ENCODE measurements at regions of chr9 and their contacts with region 1.

Region 1: GRCh38 chr9:109574068-109574882 is 76.2 kb upstream of the PTPN3 start:
- DNase-seq: peak; percentile 38
- ATAC-seq: peak; percentile 92
- H3K4me3 ChIP-seq: no peak overlapping the region
- H3K27ac ChIP-seq: no peak overlapping the region
- H3K4me1 ChIP-seq: no peaks in the 10 kb centered on the region
- H3K27me3 ChIP-seq: 0 out of 2 replicates have a peak, but pooled peaks cover 5% of the 10 kb centered on the region
- CTCF ChIP-seq: peak; percentile 58 to 82 (median 72)
- POLR2A ChIP-seq: no peak
- RAD21 ChIP-seq: peak; percentile 84

Region 2: DNA sequence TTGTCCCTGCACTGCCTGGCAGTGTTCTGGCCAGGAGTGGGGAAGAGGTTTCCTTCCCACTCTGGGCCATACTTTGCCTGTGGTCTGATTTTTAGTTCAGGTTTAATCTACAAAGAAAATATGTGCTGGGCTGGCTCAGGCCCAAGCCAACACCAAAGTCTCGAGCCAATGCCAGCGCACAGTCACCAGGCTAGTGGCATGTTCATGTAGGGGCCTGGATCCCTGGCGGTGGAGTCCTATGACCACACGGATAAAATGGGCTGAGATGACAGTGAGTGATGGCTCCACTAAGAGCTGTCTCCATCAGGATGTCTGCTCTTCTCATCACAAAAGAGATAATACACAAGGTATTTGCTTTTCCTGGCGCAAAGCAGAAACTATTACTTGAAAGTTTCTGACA is 16.7 kb after region 1 on chr9:
- CTCF ChIA-PET with region 1: no interaction called
- POLR2A ChIA-PET with region 1: no interaction called
- RAD21 ChIA-PET with region 1: no interaction called
- intact Hi-C with region 1: no loop called
- DNase-seq: no peak
- ATAC-seq: no peak
- H3K4me3 ChIP-seq: no peak overlapping the region
- H3K27ac ChIP-seq: no peak overlapping the region
- H3K4me1 ChIP-seq: no peaks in the 10 kb centered on the region
- H3K27me3 ChIP-seq: no peaks in the 10 kb centered on the region
- CTCF ChIP-seq: no peak
- POLR2A ChIP-seq: no peak
- RAD21 ChIP-seq: no peak

Region 3: GRCh38 chr9:109652964-109653363 is 78.7 kb after region 1 on chr9:
- CTCF ChIA-PET with region 1: interaction called, 3 read pairs
- POLR2A ChIA-PET with region 1: no interaction called
- RAD21 ChIA-PET with region 1: no interaction called
- intact Hi-C with region 1: loop called (anchors 1 kb)
- DNase-seq: no peak
- ATAC-seq: peak; percentile 73
- H3K4me3 ChIP-seq: no peak overlapping the region
- H3K27ac ChIP-seq: no peak overlapping the region
- H3K4me1 ChIP-seq: peaks cover 0 to 3% of the 10 kb centered on the region in 2 experiments; a peak in 1 of 4 replicates
- H3K27me3 ChIP-seq: peaks cover 24% of the 10 kb centered on the region; the same call in 1 of the 2 replicates
- CTCF ChIP-seq: peak; percentile 47 to 51 (median 48); a peak in 5 of 6 replicates
- POLR2A ChIP-seq: no peak
- RAD21 ChIP-seq: peak; percentile 68

Region 4: GRCh38 chr9:109817846-109818472 is 243.7 kb after region 1 on chr9:
- CTCF ChIA-PET with region 1: interaction called, 29 read pairs
- POLR2A ChIA-PET with region 1: no interaction called
- RAD21 ChIA-PET with region 1: interaction called in 1 of 2 experiments, 4 read pairs
- intact Hi-C with region 1: loop called (anchors 1 kb)
- DNase-seq: peak; percentile 78
- ATAC-seq: peak; percentile 89
- H3K4me3 ChIP-seq: no peak overlapping the region
- H3K27ac ChIP-seq: no peak overlapping the region
- H3K4me1 ChIP-seq: peaks cover 4 to 28% of the 10 kb centered on the region in 2 experiments
- H3K27me3 ChIP-seq: no peaks in the 10 kb centered on the region
- CTCF ChIP-seq: peak; percentile 65 to 90 (median 72)
- POLR2A ChIP-seq: no peak
- RAD21 ChIP-seq: peak; percentile 79

Region 5: GRCh38 chr9:109880277-109881169 is 306.2 kb after region 1 on chr9:
- CTCF ChIA-PET with region 1: interaction called, 4 read pairs
- POLR2A ChIA-PET with region 1: no interaction called
- RAD21 ChIA-PET with region 1: no interaction called
- intact Hi-C with region 1: loop called (anchors 10 kb)
- DNase-seq: peak; percentile 67
- ATAC-seq: peak; percentile 95
- H3K4me3 ChIP-seq: peak overlapping the region; percentile 36 to 40
- H3K27ac ChIP-seq: no peak overlapping the region
- H3K4me1 ChIP-seq: peaks cover 0 to 3% of the 10 kb centered on the region in 2 experiments; a peak in 1 of 4 replicates
- H3K27me3 ChIP-seq: peaks cover 17% of the 10 kb centered on the region
- CTCF ChIP-seq: peak; percentile 39 to 84 (median 68); a peak in 5 of 6 replicates
- POLR2A ChIP-seq: no peak
- RAD21 ChIP-seq: peak; percentile 36

Region 6: GRCh38 chr9:109903515-109904138 is 329.4 kb after region 1 on chr9:
- CTCF ChIA-PET with region 1: interaction called, 14 read pairs
- POLR2A ChIA-PET with region 1: no interaction called
- RAD21 ChIA-PET with region 1: interaction called, 3 read pairs
- intact Hi-C with region 1: no loop called
- DNase-seq: peak; percentile 76
- ATAC-seq: peak; percentile 93
- H3K4me3 ChIP-seq: no peak overlapping the region
- H3K27ac ChIP-seq: no peak overlapping the region
- H3K4me1 ChIP-seq: no peaks in the 10 kb centered on the region
- H3K27me3 ChIP-seq: no peaks in the 10 kb centered on the region
- CTCF ChIP-seq: peak; percentile 70 to 91 (median 89)
- POLR2A ChIP-seq: no peak
- RAD21 ChIP-seq: peak; percentile 97

Region 7: GRCh38 chr9:110058304-110058953 is 484.2 kb after region 1 on chr9:
- CTCF ChIA-PET with region 1: interaction called, 4 read pairs
- POLR2A ChIA-PET with region 1: no interaction called
- RAD21 ChIA-PET with region 1: no interaction called
- intact Hi-C with region 1: loop called (anchors 2 kb)
- DNase-seq: peak; percentile 67
- ATAC-seq: peak; percentile 96
- H3K4me3 ChIP-seq: no peak overlapping the region
- H3K27ac ChIP-seq: no peak overlapping the region
- H3K4me1 ChIP-seq: peaks cover 6 to 17% of the 10 kb centered on the region in 2 experiments; a peak in 3 of 4 replicates
- H3K27me3 ChIP-seq: no peaks in the 10 kb centered on the region
- CTCF ChIP-seq: peak; percentile 76 to 88 (median 77)
- POLR2A ChIP-seq: no peak
- RAD21 ChIP-seq: peak; percentile 96

Region 8: GRCh38 chr9:110152704-110153374 is 578.6 kb after region 1 on chr9:
- CTCF ChIA-PET with region 1: no interaction called
- POLR2A ChIA-PET with region 1: no interaction called
- RAD21 ChIA-PET with region 1: no interaction called
- intact Hi-C with region 1: loop called (anchors 5 kb)
- DNase-seq: peak; percentile 27
- ATAC-seq: peak; percentile 84
- H3K4me3 ChIP-seq: no peak overlapping the region
- H3K27ac ChIP-seq: no peak overlapping the region
- H3K4me1 ChIP-seq: peaks cover 0 to 9% of the 10 kb centered on the region in 2 experiments; a peak in 2 of 4 replicates
- H3K27me3 ChIP-seq: no peaks in the 10 kb centered on the region
- CTCF ChIP-seq: peak; percentile 67 to 78 (median 75)
- POLR2A ChIP-seq: no peak
- RAD21 ChIP-seq: peak; percentile 89